Activated naive CD8-positive, alpha-beta T cell treated with anti-CD3 and anti-CD28 coated beads, Interleukin-2, amount 10 ng/mL, durations not matched to agents 7 days and 5 days (primary cell): ENCODE measurements at regions of chr21 and their contacts with region 1.

Region 1: GRCh38 chr21:37267269-37268184 is at the start of gene VPS26C:
- DNase-seq: peak; percentile 97
- ATAC-seq: peak; percentile 91
- H3K4me3 Mint-ChIP-seq: peak within 1 kb of the TSS; percentile 98
- H3K27ac Mint-ChIP-seq: peak within 1 kb of the TSS; percentile 98
- H3K4me1 Mint-ChIP-seq: peaks cover 36% of the 10 kb centered on the region
- H3K27me3 Mint-ChIP-seq: no peaks in the 10 kb centered on the region
- total RNA-seq, gene VPS26C: 94.0 to 97.3 TPM

Region 2: GRCh38 chr21:37244501-37245083 is 22.9 kb before region 1 on chr21:
- POLR2A ChIA-PET with region 1: interaction called, 19 read pairs
- DNase-seq: peak; percentile 62
- ATAC-seq: peak; percentile 88
- H3K4me3 Mint-ChIP-seq: peak overlapping the region; percentile 85
- H3K27ac Mint-ChIP-seq: peak overlapping the region; percentile 95
- H3K4me1 Mint-ChIP-seq: peaks cover 81% of the 10 kb centered on the region
- H3K27me3 Mint-ChIP-seq: no peaks in the 10 kb centered on the region

Region 3: GRCh38 chr21:37366482-37367316 is 99.2 kb after region 1 on chr21 and contains the start of gene DYRK1A:
- POLR2A ChIA-PET with region 1: interaction called, 61 read pairs
- DNase-seq: peak; percentile 97
- ATAC-seq: peak; percentile 79
- H3K4me3 Mint-ChIP-seq: peak within 1 kb of the TSS; percentile 99
- H3K27ac Mint-ChIP-seq: peak within 1 kb of the TSS; percentile 99
- H3K4me1 Mint-ChIP-seq: peaks cover 38% of the 10 kb centered on the region
- H3K27me3 Mint-ChIP-seq: no peaks in the 10 kb centered on the region
- total RNA-seq, gene DYRK1A: 109 to 122 TPM

Region 4: GRCh38 chr21:37563641-37564340 is 296.3 kb after region 1 on chr21:
- POLR2A ChIA-PET with region 1: interaction called, 20 read pairs
- DNase-seq: peak; percentile 94
- ATAC-seq: peak; percentile 90
- H3K4me3 Mint-ChIP-seq: peak overlapping the region; percentile 95
- H3K27ac Mint-ChIP-seq: peak overlapping the region; percentile 99
- H3K4me1 Mint-ChIP-seq: peaks cover 23% of the 10 kb centered on the region
- H3K27me3 Mint-ChIP-seq: no peaks in the 10 kb centered on the region